Activated CD8-positive, alpha-beta T cell treated with anti-CD3 and anti-CD28 coated beads for 36 hours (primary cell): ENCODE measurements at regions of chr17 and their contacts with region 1.

Region 1: DNA sequence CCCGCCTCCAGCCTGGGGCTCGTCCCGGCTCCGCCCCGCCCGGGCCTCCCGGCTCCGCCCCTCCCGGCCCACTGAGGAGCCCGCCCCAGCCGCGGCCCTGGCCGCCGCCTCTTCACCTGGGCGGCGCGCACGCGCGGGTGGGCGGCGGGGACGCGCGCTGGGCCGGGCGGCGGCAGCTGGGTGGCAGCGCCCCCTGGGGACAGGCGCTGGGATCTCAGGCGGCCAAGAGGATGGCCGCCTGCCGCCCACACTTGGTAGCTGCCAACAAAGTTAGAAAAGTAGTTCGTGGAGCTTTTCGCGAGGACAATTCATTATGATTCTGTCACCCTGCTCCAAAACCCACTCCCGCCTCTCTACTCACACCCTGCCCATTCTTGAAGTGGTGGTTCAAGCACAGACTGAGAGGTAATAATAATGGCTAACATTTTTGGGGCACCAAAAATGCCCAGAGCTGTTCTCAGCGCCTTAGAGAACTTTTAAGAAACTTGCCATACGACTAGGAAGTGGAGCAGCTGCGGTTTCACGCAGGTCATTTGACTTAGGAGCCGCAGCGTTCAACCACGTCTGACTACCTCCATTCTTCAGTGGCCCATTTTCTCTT is 340 bp upstream of the MYO1D start:
- DNase-seq: peak; percentile 90
- ATAC-seq: peak; percentile 98
- H3K4me3 Mint-ChIP-seq: peak overlapping the region; percentile 63
- H3K27ac Mint-ChIP-seq: peak overlapping the region; percentile 75
- H3K4me1 Mint-ChIP-seq: peaks cover 15% of the 10 kb centered on the region
- H3K27me3 Mint-ChIP-seq: peaks cover 2% of the 10 kb centered on the region
- CTCF ChIP-seq: peak; percentile 59

Region 2: GRCh38 chr17:32444308-32445073 is 432.8 kb before region 1 on chr17 and contains the start of gene PSMD11:
- CTCF ChIA-PET with region 1: interaction called, 10 read pairs
- POLR2A ChIA-PET with region 1: interaction called, 3 read pairs
- intact Hi-C with region 1: no loop called
- DNase-seq: peak; percentile 99
- ATAC-seq: peak; percentile 97
- H3K4me3 Mint-ChIP-seq: peak within 1 kb of the TSS; percentile 80
- H3K27ac Mint-ChIP-seq: peak within 1 kb of the TSS; percentile 76
- H3K4me1 Mint-ChIP-seq: peaks cover 37% of the 10 kb centered on the region
- H3K27me3 Mint-ChIP-seq: peaks cover 6% of the 10 kb centered on the region
- CTCF ChIP-seq: no peak
- total RNA-seq, gene PSMD11: 119 to 130 TPM

Region 3: DNA sequence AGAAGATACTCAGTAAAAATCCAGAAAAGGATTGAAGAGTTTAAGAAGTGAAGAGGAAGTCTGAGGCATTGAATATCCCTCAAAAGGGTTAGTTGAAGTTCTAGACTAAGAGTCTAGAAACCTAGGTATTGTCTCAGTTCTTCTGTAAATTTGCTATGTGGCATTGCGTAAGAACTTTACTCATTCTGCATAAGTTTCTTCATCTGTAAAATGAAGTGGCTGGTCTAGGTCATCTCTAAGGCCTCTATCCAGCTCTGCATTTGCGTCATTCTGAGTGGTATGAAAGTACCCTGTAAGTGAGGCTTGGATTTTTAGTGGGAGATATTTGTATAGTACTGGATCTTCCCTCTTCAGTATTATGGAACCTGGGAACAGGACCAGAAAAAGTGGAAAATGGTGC is 130.6 kb before region 1 on chr17:
- CTCF ChIA-PET with region 1: no interaction called
- POLR2A ChIA-PET with region 1: no interaction called
- intact Hi-C with region 1: no loop called
- DNase-seq: no peak
- ATAC-seq: no peak
- H3K4me3 Mint-ChIP-seq: no peak overlapping the region
- H3K27ac Mint-ChIP-seq: no peak overlapping the region
- H3K4me1 Mint-ChIP-seq: no peaks in the 10 kb centered on the region
- H3K27me3 Mint-ChIP-seq: no peaks in the 10 kb centered on the region
- CTCF ChIP-seq: no peak

Region 4: DNA sequence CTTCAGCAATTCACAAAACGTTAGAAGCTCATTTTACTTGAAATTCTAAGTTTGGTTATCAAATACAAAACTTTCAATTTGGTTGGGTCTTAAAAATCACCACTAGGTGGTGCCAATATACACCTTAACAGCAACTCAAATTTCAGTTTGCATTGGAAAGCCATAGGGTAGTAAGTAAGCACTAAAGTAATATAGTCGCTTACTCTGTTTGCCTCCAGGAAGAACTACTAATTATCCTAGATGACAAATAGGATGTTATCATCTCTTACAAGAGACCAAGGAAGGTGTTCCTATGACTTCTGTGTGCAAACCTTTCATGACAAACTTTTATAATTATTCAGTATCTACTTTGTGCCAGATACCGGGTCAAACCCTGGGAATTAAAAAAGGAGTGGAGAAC is 93.7 kb before region 1 on chr17:
- CTCF ChIA-PET with region 1: interaction called, 130 read pairs
- POLR2A ChIA-PET with region 1: no interaction called
- intact Hi-C with region 1: loop called (anchors 5 kb)
- DNase-seq: no peak
- ATAC-seq: peak; percentile 34
- H3K4me3 Mint-ChIP-seq: no peak overlapping the region
- H3K27ac Mint-ChIP-seq: no peak overlapping the region
- H3K4me1 Mint-ChIP-seq: no peaks in the 10 kb centered on the region
- H3K27me3 Mint-ChIP-seq: no peaks in the 10 kb centered on the region
- CTCF ChIP-seq: peak; percentile 81

Region 5: GRCh38 chr17:32859857-32860525 is 17.3 kb before region 1 on chr17:
- CTCF ChIA-PET with region 1: interaction called, 18 read pairs
- POLR2A ChIA-PET with region 1: interaction called, 3 read pairs
- intact Hi-C with region 1: no loop called
- DNase-seq: peak; percentile 21
- ATAC-seq: peak; percentile 91
- H3K4me3 Mint-ChIP-seq: no peak overlapping the region
- H3K27ac Mint-ChIP-seq: no peak overlapping the region
- H3K4me1 Mint-ChIP-seq: peaks cover 10% of the 10 kb centered on the region
- H3K27me3 Mint-ChIP-seq: peaks cover 3% of the 10 kb centered on the region
- CTCF ChIP-seq: no peak

Region 6: GRCh38 chr17:32909787-32910369 is 32.6 kb after region 1 on chr17:
- CTCF ChIA-PET with region 1: interaction called, 21 read pairs
- POLR2A ChIA-PET with region 1: no interaction called
- intact Hi-C with region 1: no loop called
- DNase-seq: peak; percentile 86
- ATAC-seq: peak; percentile 86
- H3K4me3 Mint-ChIP-seq: no peak overlapping the region
- H3K27ac Mint-ChIP-seq: no peak overlapping the region
- H3K4me1 Mint-ChIP-seq: peaks cover 12% of the 10 kb centered on the region
- H3K27me3 Mint-ChIP-seq: peaks cover 10% of the 10 kb centered on the region
- CTCF ChIP-seq: peak; percentile 71

Region 7: DNA sequence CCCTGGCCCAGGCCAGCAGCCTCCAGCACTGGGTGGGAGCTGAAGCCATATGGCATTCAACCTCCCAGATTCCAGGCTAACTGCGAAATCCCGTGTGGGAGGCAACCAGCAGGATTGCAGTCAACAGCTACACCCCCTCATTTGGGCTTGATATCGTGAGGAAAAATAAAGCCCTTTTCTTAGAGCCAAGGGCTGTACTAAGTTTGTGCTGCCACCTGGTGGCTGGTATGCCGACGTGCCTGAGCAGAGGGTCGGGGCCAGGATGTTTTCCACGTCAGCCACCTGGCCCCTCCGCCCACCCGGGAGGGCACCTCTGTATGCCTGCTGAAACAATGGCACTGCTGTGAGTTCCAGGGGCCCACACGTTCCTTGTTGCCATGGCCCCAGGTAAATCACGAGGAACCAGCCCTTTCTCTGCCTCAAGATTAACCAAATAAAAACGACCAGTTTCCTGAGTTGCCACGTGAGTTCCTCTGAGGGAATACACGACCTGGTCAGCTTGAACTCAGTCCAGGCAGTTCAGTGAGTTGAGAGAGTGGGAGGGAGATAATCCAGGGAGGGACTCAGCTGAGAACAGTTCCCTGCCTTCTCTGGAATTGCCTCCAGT is 59.7 kb after region 1 on chr17:
- CTCF ChIA-PET with region 1: interaction called, 23 read pairs
- POLR2A ChIA-PET with region 1: no interaction called
- intact Hi-C with region 1: no loop called
- DNase-seq: peak; percentile 80
- ATAC-seq: peak; percentile 96
- H3K4me3 Mint-ChIP-seq: no peak overlapping the region
- H3K27ac Mint-ChIP-seq: no peak overlapping the region
- H3K4me1 Mint-ChIP-seq: peaks cover 3% of the 10 kb centered on the region
- H3K27me3 Mint-ChIP-seq: peaks cover 18% of the 10 kb centered on the region
- CTCF ChIP-seq: peak; percentile 96

Region 8: GRCh38 chr17:32992321-32993033 is 115.2 kb after region 1 on chr17:
- CTCF ChIA-PET with region 1: no interaction called
- POLR2A ChIA-PET with region 1: no interaction called
- intact Hi-C with region 1: no loop called
- DNase-seq: no peak
- ATAC-seq: no peak
- H3K4me3 Mint-ChIP-seq: no peak overlapping the region
- H3K27ac Mint-ChIP-seq: no peak overlapping the region
- H3K4me1 Mint-ChIP-seq: no peaks in the 10 kb centered on the region
- H3K27me3 Mint-ChIP-seq: peaks cover 9% of the 10 kb centered on the region
- CTCF ChIP-seq: no peak